Endothelial cell of umbilical vein (primary cell): ENCODE measurements at regions of chr17 and their contacts with region 1.

Region 1: DNA sequence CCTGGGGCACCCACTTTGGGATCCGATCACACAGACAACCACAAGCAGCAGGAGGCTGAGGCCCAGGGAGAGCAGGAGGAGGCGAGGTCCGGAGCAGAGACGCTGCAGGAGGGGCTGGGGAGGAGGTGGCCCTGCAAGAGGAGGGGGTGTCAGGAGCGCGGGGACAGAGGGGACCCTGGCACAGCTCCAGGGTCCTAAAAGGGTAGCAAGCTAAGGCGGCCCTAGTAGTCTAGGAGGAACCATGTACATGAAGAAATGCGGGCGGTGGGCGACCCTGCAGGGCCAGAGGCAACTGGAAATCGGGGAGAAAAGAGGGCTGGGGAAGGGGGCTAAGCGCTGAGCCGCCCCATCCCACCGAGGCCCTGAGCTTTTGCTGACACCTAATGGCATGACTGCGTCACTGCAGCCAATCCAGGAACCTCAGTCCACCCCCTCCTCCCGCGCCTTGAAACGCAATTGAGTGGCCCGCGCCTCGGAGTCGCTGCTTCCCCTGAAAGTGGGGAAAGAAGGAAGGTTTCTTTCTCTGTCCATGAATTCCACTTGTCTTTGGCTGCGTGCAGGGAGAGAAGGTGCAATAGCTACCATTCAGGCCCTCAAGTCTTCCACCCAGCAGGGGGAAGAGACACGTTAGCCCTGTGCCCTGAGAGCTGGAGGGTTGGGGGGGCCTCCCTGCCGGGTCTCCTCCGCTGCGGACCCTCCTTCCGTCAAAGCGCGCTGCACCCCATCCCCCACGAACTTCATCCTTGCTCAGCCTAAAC is 1.8 kb downstream of the ASGR1 start:
- DNase-seq: peak; percentile 74
- H3K4me3 ChIP-seq: peak overlapping the region; percentile 30 to 66 (median 46)
- H3K27ac ChIP-seq: peak overlapping the region; percentile 63
- H3K4me1 ChIP-seq: peaks cover 17% of the 10 kb centered on the region
- H3K27me3 ChIP-seq: no peaks in the 10 kb centered on the region
- CTCF ChIP-seq: peak; percentile 81 to 95
- POLR2A ChIP-seq: peak; percentile 28

Region 2: GRCh38 chr17:7122381-7122780 is 55.0 kb before region 1 on chr17:
- CTCF ChIA-PET with region 1: no interaction called
- POLR2A ChIA-PET with region 1: no interaction called
- dilution Hi-C with region 1: no loop called
- intact Hi-C with region 1: no loop called
- DNase-seq: peak; percentile 54
- H3K4me3 ChIP-seq: peak overlapping the region in 1 of 3 experiments; percentile 8
- H3K27ac ChIP-seq: no peak overlapping the region
- H3K4me1 ChIP-seq: peaks cover 8% of the 10 kb centered on the region
- H3K27me3 ChIP-seq: peaks cover 0 to 9% of the 10 kb centered on the region in 2 experiments
- CTCF ChIP-seq: no peak
- POLR2A ChIP-seq: no peak

Region 3: DNA sequence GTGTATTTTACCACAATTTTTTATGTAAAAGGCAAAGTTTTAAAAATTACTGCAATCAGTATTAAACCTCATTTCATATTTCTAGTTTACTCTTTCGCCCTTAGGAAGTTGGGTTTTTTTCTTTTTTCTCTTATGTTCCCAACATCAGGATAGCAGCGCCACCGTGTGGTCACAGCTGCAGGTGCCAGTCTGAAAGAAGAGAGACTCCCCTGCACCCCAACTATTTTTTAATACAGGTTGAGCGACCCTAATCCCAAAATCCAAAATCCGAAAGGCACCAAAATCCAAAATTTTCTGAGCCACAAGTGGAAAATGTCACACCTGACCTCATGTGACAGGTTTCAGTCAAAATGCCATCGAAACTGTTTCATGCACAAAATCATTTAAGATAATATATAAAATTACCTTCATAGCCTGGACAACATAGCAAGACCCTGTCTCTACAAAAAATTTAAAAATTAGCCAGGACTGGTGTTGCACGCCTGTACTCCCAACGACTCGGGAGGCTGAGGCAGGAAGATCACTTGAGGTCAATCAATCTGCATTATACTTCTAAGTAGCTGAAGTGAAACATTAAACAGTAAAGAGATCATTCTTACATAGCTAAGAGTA is 41.0 kb before region 1 on chr17:
- CTCF ChIA-PET with region 1: interaction called, 15 read pairs
- POLR2A ChIA-PET with region 1: interaction called, 4 read pairs
- dilution Hi-C with region 1: no loop called
- intact Hi-C with region 1: loop called (anchors 1 kb)
- DNase-seq: peak; percentile 73
- H3K4me3 ChIP-seq: no peak overlapping the region
- H3K27ac ChIP-seq: no peak overlapping the region
- H3K4me1 ChIP-seq: peaks cover 18% of the 10 kb centered on the region
- H3K27me3 ChIP-seq: peaks cover 0 to 1% of the 10 kb centered on the region in 2 experiments
- CTCF ChIP-seq: peak; percentile 79 to 89
- POLR2A ChIP-seq: no peak

Region 4: GRCh38 chr17:7141824-7142223 is 35.6 kb before region 1 on chr17:
- CTCF ChIA-PET with region 1: interaction called, 15 read pairs
- POLR2A ChIA-PET with region 1: no interaction called
- dilution Hi-C with region 1: no loop called
- intact Hi-C with region 1: no loop called
- DNase-seq: no peak
- H3K4me3 ChIP-seq: no peak overlapping the region
- H3K27ac ChIP-seq: no peak overlapping the region
- H3K4me1 ChIP-seq: peaks cover 4% of the 10 kb centered on the region
- H3K27me3 ChIP-seq: peaks cover 0 to 6% of the 10 kb centered on the region in 2 experiments
- CTCF ChIP-seq: no peak
- POLR2A ChIP-seq: no peak

Region 5: DNA sequence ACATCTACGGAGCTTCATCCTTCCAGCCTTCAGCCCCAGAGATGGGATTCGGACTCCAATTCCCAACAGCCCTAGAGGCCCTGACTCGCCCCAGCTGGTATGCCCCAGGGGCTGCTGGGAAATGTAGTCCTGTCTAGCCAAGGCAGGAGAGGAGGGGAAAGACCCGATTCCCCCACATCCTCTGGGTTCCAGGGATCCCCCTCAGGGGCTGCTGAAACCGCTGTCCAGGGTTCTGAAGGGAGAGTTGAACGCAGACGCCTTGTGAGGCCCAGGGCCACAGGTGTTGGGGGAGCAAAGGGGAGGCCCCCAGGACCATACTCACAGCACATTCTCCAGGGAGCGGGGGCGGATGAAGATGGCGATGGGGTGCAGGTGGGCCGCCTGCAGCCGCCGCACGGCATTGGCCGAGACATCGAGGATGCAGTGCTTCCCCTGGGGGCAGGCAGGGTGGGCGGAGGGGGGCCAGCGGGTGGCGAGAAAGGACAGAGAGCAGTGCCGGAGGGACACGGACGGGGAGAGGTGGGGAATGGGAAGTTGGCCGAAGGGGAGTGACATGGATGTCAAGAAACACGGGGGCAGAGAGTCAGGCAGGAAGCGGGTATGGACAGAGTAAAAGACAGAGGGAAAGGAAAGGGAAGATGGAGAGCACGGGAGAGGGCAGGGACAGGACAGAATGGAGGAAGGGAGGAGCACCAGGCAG is 14.3 kb after region 1 on chr17:
- CTCF ChIA-PET with region 1: interaction called, 20 read pairs
- POLR2A ChIA-PET with region 1: no interaction called
- dilution Hi-C with region 1: no loop called
- intact Hi-C with region 1: no loop called
- DNase-seq: no peak
- H3K4me3 ChIP-seq: no peak overlapping the region
- H3K27ac ChIP-seq: no peak overlapping the region
- H3K4me1 ChIP-seq: no peaks in the 10 kb centered on the region
- H3K27me3 ChIP-seq: no peaks in the 10 kb centered on the region
- CTCF ChIP-seq: no peak
- POLR2A ChIP-seq: no peak

Region 6: DNA sequence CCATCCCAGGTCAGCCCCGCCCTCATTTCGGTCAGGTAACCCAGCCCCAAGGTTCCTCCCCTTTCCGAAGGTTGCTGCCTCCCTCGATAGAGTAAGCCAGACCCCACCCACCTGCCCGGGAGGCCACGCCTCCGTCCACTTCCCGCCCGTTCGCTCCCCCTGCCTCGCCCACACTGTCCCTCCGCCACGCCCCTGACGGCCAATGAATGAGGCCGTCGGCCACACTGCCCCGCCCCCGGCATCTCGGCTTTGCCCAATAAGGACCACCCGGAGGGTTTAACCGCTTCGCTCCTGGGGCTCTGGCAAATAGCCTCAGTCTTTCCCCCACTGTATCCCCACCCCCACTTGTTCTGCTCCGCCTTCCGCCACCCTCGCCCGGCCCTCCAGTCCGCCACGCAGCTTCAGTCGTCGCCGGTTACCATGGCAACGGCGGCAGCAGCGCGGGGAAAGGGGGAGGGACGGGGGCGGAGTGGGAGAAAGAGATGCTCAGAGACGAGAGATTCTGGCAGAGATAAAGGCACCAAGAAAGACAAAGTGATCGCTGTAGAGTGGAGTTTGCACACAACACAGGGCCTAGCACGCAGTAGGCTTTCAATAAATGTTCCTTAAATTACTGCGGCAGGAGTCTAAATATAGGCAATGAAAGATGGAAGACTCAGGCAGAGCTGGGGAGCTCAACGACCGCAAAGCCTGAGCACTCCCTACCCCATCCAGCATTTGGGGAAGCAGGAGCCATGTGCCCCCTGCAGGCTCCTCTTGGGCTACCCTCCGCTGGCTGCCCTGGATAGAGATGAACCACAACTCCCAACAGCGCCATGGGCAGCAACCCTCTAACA is 37.1 kb after region 1 on chr17:
- CTCF ChIA-PET with region 1: interaction called, 11 read pairs
- POLR2A ChIA-PET with region 1: no interaction called
- dilution Hi-C with region 1: no loop called
- intact Hi-C with region 1: loop called (anchors 1 kb)
- DNase-seq: peak; percentile 99
- H3K4me3 ChIP-seq: peak overlapping the region in 2 of 3 experiments; percentile 43 to 44
- H3K27ac ChIP-seq: peak overlapping the region; percentile 63
- H3K4me1 ChIP-seq: peaks cover 33% of the 10 kb centered on the region
- H3K27me3 ChIP-seq: no peaks in the 10 kb centered on the region
- CTCF ChIP-seq: peak; percentile 48 to 74
- POLR2A ChIP-seq: no peak

Region 7: DNA sequence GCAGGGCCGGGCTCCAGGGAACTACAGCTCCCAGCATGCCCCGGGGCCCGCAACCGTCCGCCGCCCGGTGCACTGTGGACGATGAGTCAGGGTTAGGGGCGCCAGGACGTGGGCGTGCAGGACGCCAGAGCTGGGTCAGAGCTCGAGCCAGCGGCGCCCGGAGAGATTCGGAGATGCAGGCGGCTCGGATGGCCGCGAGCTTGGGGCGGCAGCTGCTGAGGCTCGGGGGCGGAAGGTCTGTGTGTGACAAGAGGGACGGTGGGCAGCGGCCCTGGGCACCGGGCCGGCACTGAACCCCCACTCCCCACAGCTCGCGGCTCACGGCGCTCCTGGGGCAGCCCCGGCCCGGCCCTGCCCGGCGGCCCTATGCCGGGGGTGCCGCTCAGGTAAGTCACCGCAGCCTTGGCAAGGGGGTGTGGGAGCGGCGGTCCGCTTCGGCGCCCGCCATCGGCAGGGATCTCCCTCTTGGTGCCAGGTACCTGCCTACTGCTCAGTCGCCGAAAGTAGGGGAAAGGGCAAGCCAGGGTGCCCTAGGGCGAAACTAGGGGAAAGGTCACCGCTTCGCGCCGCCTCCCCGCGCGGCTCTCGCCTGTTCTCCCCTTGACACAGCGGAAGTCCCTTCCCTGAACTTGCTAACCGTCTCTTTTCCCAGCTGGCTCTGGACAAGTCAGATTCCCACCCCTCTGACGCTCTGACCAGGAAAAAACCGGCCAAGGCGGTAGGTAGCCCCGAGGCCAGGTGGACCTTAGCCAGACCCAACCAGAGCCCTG is 42.6 kb after region 1 on chr17 and contains the starts of genes ACADVL and DLG4:
- CTCF ChIA-PET with region 1: interaction called, 4 read pairs
- POLR2A ChIA-PET with region 1: no interaction called
- dilution Hi-C with region 1: no loop called
- intact Hi-C with region 1: loop called (anchors 1 kb)
- DNase-seq: peak; percentile 85
- H3K4me3 ChIP-seq: peak within 1 kb of the TSS; percentile 51 to 69 (median 61)
- H3K27ac ChIP-seq: peak within 1 kb of the TSS; percentile 71
- H3K4me1 ChIP-seq: peaks cover 29% of the 10 kb centered on the region
- H3K27me3 ChIP-seq: no peaks in the 10 kb centered on the region
- CTCF ChIP-seq: no peak
- POLR2A ChIP-seq: peak; percentile 83
- total RNA-seq, gene ACADVL: 300 and 308 TPM in 2 replicates
- total RNA-seq, gene DLG4: 26.6 and 34.6 TPM in 2 replicates

Region 8: GRCh38 chr17:8016632-8017478 is 839.5 kb after region 1 on chr17:
- CTCF ChIA-PET with region 1: no interaction called
- POLR2A ChIA-PET with region 1: no interaction called
- dilution Hi-C with region 1: no loop called
- intact Hi-C with region 1: no loop called
- DNase-seq: peak; percentile 12
- H3K4me3 ChIP-seq: no peak overlapping the region
- H3K27ac ChIP-seq: no peak overlapping the region
- H3K4me1 ChIP-seq: no peaks in the 10 kb centered on the region
- H3K27me3 ChIP-seq: peaks cover 6 to 22% of the 10 kb centered on the region in 2 experiments
- CTCF ChIP-seq: peak; percentile 55 to 69
- POLR2A ChIP-seq: no peak